ENCODE measurements at regions of chr11 and their contacts with region 1.

Region 1: DNA sequence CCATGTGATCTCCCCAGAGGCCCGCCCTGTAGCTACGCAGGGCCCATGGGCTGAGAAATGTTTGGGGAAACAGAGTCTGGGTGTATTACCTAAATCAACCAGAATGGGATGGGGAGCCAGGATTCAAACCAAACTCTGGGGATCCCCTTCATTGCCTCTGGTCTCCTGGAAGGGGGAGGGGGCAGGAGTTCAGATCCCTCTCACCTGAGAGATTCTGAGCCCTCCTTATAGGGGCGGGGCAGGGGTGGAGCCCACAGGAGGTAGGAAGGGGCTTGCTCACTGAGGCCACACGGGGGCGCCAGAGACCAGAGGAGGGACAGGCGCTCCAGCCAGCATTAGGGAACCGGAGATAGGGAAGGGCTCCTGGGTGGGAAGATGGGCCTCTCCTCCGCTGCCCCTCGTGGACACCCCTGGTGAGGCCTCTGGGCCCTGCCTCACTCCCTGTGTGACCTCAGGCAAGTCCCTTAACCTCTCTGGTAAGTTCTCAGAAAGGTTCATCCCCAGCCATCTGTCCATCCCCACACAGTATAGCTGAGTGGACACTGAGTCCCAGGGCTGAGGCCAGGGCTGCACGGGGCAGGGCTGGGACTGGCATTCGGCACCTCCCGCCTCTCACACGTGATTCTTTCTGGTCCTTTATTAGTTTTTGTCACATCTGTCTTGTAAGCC is 2.7 kb upstream of the CDC42BPG start:
- DNase-seq: peak; percentile 75
- H3K4me3 ChIP-seq: no peak overlapping the region
- H3K27ac ChIP-seq: no peak overlapping the region
- H3K27me3 ChIP-seq: no peaks in the 10 kb centered on the region
- CTCF ChIP-seq: peak; percentile 93

Region 2: DNA sequence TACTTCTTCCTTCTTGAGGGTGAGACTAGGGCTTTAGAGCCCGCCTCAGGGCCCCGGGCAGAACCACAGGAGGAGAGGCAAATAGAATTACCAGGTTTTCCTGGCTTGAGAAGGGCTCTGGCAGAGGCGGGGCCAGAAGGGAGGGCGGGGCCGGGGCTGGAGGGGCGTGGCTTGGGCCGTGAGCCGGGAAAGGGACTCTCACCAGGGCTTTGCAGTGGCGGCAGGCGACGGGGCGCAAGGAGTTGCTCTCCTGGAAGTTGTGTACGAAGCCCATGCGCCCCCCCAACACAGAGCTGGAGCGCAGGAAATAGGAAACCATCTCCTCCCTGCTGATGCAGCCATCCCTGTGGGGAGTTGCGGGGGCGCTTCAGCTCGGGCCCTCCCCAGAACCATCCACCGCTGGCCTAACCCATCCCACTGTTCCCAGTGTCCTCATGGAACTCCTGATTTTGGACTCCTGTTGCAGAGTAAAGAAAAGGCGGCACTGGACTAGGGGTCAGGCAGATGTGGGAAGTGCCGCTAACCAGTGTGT is 117.2 kb before region 1 on chr11:
- in situ Hi-C with region 1: no loop called
- DNase-seq: no peak
- H3K4me3 ChIP-seq: no peak overlapping the region
- H3K27ac ChIP-seq: no peak overlapping the region
- H3K27me3 ChIP-seq: peaks cover 4% of the 10 kb centered on the region
- CTCF ChIP-seq: no peak

Region 3: GRCh38 chr11:64894070-64894796 is 47.1 kb after region 1 on chr11:
- in situ Hi-C with region 1: loop called (anchors 5 kb)
- DNase-seq: peak; percentile 39
- H3K4me3 ChIP-seq: no peak overlapping the region
- H3K27ac ChIP-seq: no peak overlapping the region
- H3K27me3 ChIP-seq: no peaks in the 10 kb centered on the region
- CTCF ChIP-seq: peak; percentile 95

Measured in brain microvascular endothelial cell (primary cell).